PC-9 (cell line): ENCODE measurements at regions of chr12 and their contacts with region 1.

Region 1: GRCh38 chr12:85603556-85603955 is 232.7 kb downstream of the RASSF9 start:
- DNase-seq: no peak
- H3K4me3 ChIP-seq: no peak overlapping the region
- H3K27ac ChIP-seq: no peak overlapping the region
- H3K4me1 ChIP-seq: no peaks in the 10 kb centered on the region
- H3K27me3 ChIP-seq: no peaks in the 10 kb centered on the region
- CTCF ChIP-seq: no peak

Region 2: GRCh38 chr12:84294246-84294645 is 1309.3 kb before region 1 on chr12:
- CTCF ChIA-PET with region 1: interaction called, 12 read pairs
- POLR2A ChIA-PET with region 1: no interaction called
- intact Hi-C with region 1: no loop called
- DNase-seq: no peak
- H3K4me3 ChIP-seq: no peak overlapping the region
- H3K27ac ChIP-seq: no peak overlapping the region
- H3K4me1 ChIP-seq: no peaks in the 10 kb centered on the region
- H3K27me3 ChIP-seq: no peaks in the 10 kb centered on the region
- CTCF ChIP-seq: no peak

Region 3: DNA sequence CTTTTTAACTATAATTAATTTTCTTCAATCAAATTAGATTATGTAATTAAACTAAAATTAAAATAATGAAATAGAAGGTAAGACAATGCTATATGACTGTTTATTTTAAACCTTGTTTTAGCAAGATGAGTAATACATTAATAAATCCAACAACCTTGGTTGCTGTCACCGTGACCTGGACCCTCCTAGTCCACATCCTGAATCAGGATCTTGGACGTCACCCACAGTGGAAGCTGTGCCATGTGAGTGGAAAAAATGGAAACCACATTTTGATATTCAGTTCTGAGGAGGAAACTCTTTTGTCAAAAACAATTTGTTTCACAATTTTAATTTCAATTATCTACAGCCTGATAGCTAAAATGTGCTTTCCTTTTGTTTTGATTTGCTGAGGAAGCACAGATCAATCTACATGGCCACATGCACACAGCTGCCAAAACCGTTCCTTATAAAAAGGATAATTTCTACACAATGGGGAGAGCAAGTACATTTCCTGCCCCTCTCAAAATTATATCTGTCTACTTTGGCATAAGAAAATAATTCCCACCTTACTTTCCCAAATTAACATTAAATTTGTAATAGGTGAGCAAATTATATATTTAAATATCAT is 22.9 kb before region 1 on chr12:
- CTCF ChIA-PET with region 1: no interaction called
- POLR2A ChIA-PET with region 1: no interaction called
- intact Hi-C with region 1: no loop called
- DNase-seq: no peak
- H3K4me3 ChIP-seq: no peak overlapping the region
- H3K27ac ChIP-seq: no peak overlapping the region
- H3K4me1 ChIP-seq: no peaks in the 10 kb centered on the region
- H3K27me3 ChIP-seq: no peaks in the 10 kb centered on the region
- CTCF ChIP-seq: no peak